PC-9 (cell line): ENCODE measurements at regions of chr1 and their contacts with region 1.

Region 1: DNA sequence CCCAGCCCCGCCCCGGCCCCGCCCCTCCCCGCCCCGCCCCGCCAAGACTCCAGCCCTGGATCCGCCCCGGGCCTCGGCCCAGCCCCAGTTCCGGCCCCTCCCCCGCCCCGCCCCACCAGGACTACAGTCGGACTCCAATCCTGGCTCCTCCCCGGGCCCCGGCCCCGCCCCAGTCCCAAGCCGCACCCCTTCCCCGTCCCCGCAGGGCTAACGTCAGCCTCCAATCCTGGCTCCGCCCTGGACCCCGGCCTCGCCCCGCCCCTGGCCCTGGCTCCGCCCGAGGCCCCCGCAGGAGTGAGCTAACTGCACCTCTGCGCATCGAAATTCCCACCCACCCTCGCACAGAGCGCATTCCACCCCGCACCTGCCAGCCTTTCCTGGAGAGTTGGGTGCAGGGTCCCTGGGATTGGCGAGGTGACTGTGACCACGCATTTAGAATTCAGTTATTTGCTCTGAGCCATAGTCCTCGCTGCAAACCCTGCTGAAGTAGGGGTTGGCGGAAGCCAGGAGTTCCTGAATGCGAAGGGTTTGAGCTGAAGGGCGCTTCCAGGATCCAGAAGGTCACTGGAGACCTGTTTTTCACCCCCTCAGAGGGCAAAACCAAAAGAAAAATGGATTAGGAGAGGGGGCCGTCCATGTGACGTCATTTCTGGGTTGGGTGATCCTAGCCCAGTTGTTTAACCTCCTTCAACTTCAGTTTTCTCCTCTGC is 588 bp upstream of the IGSF8 start:
- DNase-seq: peak; percentile 76 to 95
- H3K4me3 ChIP-seq: peak overlapping the region; percentile 60
- H3K27ac ChIP-seq: no peak overlapping the region; the same call in 1 of the 2 replicates
- H3K4me1 ChIP-seq: peaks cover 34% of the 10 kb centered on the region
- H3K27me3 ChIP-seq: no peaks in the 10 kb centered on the region
- CTCF ChIP-seq: no peak

Region 2: DNA sequence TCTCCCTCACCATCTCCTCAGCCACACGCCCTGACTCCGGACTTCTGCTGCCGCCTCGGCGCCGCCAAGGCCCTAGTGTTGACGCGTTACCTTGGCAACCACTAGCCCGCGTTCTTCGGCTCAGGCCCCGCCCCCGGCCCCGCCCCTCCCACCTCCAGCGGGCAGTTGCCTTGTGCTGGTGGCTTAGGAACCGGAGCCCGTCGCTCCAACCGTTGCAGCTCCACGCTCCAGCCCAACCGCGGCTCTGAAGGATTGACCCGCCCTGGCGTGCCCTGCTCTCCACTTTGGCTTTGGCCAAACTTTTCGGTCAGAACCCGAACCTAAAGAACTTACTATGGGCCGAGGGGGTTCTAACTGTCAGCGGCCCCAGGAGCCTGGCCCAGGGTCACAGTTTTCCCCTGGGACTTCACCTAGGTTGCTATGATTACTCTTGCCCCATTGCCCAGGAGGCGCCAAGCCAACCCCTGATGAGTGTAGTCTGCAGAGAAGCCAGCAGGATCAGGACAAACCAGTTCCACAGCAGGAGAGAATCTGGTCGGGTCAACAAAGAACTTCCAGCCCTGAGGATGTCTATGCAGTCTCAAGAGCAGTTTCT is 198.8 kb before region 1 on chr1 and contains the start of gene CFAP45:
- CTCF ChIA-PET with region 1: no interaction called
- POLR2A ChIA-PET with region 1: no interaction called
- intact Hi-C with region 1: loop called (anchors 10 kb)
- DNase-seq: peak; percentile 87 to 94
- H3K4me3 ChIP-seq: peak within 1 kb of the TSS; percentile 53; the same call in 1 of the 2 replicates
- H3K27ac ChIP-seq: peak within 1 kb of the TSS; percentile 88
- H3K4me1 ChIP-seq: peaks cover 36% of the 10 kb centered on the region
- H3K27me3 ChIP-seq: no peaks in the 10 kb centered on the region
- CTCF ChIP-seq: no peak
- total RNA-seq, gene CFAP45: 8.2 and 9.3 TPM in 2 replicates

Region 3: GRCh38 chr1:160149716-160150115 is 50.7 kb after region 1 on chr1:
- CTCF ChIA-PET with region 1: no interaction called
- POLR2A ChIA-PET with region 1: interaction called, 23 read pairs
- intact Hi-C with region 1: no loop called
- DNase-seq: no peak
- H3K4me3 ChIP-seq: no peak overlapping the region
- H3K27ac ChIP-seq: peak overlapping the region; percentile 46
- H3K4me1 ChIP-seq: peaks cover 7% of the 10 kb centered on the region; the same call in 1 of the 2 replicates
- H3K27me3 ChIP-seq: no peaks in the 10 kb centered on the region
- CTCF ChIP-seq: no peak

Region 4: GRCh38 chr1:160179336-160179735 is 80.3 kb after region 1 on chr1:
- CTCF ChIA-PET with region 1: no interaction called
- POLR2A ChIA-PET with region 1: interaction called, 13 read pairs
- intact Hi-C with region 1: no loop called
- DNase-seq: no peak
- H3K4me3 ChIP-seq: no peak overlapping the region
- H3K27ac ChIP-seq: no peak overlapping the region
- H3K4me1 ChIP-seq: no peaks in the 10 kb centered on the region
- H3K27me3 ChIP-seq: peaks cover 4% of the 10 kb centered on the region; the same call in 1 of the 2 replicates
- CTCF ChIP-seq: no peak

Region 5: GRCh38 chr1:160219062-160219929 is 120.3 kb after region 1 on chr1:
- CTCF ChIA-PET with region 1: interaction called, 25 read pairs
- POLR2A ChIA-PET with region 1: no interaction called
- intact Hi-C with region 1: loop called (anchors 1 kb)
- DNase-seq: peak in 1 of 2 experiments; percentile 39
- H3K4me3 ChIP-seq: no peak overlapping the region
- H3K27ac ChIP-seq: no peak overlapping the region
- H3K4me1 ChIP-seq: 0 out of 2 replicates have a peak, but pooled peaks cover 4% of the 10 kb centered on the region
- H3K27me3 ChIP-seq: no peaks in the 10 kb centered on the region
- CTCF ChIP-seq: peak; percentile 65

Region 6: GRCh38 chr1:160291248-160292220 is 192.5 kb after region 1 on chr1:
- CTCF ChIA-PET with region 1: interaction called, 10 read pairs
- POLR2A ChIA-PET with region 1: interaction called, 4 read pairs
- intact Hi-C with region 1: loop called (anchors 1 kb)
- DNase-seq: peak; percentile 43 to 58
- H3K4me3 ChIP-seq: no peak overlapping the region
- H3K27ac ChIP-seq: no peak overlapping the region
- H3K4me1 ChIP-seq: peaks cover 6% of the 10 kb centered on the region
- H3K27me3 ChIP-seq: no peaks in the 10 kb centered on the region
- CTCF ChIP-seq: peak; percentile 86

Region 7: DNA sequence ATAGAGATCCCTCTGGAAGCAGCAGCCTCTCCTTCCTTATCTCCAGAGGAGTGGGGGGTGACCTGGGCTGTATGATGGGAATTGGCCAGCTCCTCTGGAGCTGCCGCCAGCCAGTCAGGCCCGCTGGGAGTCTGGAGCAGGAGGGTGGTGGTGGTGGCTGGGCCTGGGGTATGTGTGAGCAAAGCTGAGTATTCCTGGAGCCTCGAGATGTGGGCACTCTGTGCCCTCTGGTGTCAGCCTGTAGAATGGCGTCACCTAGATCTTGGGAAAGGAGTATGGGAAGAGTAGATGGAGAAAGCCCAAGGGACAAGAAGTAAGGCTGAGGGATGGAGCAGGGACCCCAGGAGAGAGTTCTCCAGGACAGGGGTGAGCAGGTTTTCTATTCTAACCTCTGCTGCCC is 317.4 kb after region 1 on chr1:
- CTCF ChIA-PET with region 1: no interaction called
- POLR2A ChIA-PET with region 1: no interaction called
- intact Hi-C with region 1: loop called (anchors 1 kb)
- DNase-seq: peak in 1 of 2 experiments; percentile 57
- H3K4me3 ChIP-seq: no peak overlapping the region
- H3K27ac ChIP-seq: no peak overlapping the region
- H3K4me1 ChIP-seq: no peaks in the 10 kb centered on the region
- H3K27me3 ChIP-seq: 0 out of 2 replicates have a peak, but pooled peaks cover 5% of the 10 kb centered on the region
- CTCF ChIP-seq: peak; percentile 65

Region 8: DNA sequence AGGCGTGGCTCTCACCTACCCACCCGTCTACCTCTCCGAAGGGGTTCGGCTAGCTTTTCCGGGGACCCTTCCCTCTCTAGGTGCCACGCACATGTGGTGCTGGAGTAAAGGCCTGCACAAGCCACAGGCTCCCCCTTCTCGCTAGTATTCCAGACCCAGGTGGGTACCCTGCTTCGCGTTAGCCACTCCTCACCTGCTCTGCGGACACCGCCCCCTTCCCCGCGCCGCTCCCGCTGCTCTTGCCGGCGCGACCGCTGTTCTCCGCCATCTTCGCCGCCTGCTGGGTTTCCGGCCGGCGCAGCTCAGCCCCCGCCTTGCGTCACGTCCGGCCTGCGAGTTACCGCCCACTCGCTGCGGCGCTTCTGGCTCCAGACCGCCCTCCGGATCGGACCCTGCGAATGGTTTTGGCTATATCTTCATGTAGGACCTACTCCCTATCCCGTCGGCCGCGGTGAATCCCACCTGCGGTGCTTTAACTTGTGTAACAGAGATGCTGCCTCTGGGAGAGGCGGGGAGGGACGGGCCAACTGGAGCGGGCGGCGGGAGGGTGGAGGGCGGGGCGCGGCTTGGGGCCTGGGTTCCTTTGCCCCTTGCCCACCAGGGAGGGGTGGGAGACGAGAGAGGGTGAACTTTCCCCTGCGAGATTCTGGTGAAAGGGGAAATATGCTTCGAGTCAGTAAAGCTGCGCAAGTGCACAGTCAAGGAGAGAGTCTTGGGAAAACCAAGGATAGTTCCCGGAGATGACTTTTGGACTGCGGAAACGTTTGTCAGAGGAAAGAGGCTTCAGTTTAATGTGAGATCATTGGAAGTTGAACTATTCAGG is 1019.0 kb after region 1 on chr1 and contains the starts of genes NIT1 and PFDN2:
- CTCF ChIA-PET with region 1: no interaction called
- POLR2A ChIA-PET with region 1: no interaction called
- intact Hi-C with region 1: no loop called
- DNase-seq: peak; percentile 70 to 80
- H3K4me3 ChIP-seq: peak within 1 kb of the TSS; percentile 82
- H3K27ac ChIP-seq: peak within 1 kb of the TSS; percentile 81
- H3K4me1 ChIP-seq: peaks cover 50% of the 10 kb centered on the region
- H3K27me3 ChIP-seq: no peaks in the 10 kb centered on the region
- CTCF ChIP-seq: no peak
- total RNA-seq, gene NIT1: 25.9 and 26.8 TPM in 2 replicates
- total RNA-seq, gene PFDN2: 68.2 and 74.4 TPM in 2 replicates